ENCODE measurements at regions of chr19 and their contacts with region 1.

Region 1: GRCh38 chr19:43446746-43447489 is 18.5 kb downstream of the LYPD3 start:
- DNase-seq: peak; percentile 74 to 81 (median 79)
- H3K4me3 ChIP-seq: no peak overlapping the region
- H3K4me3 Mint-ChIP-seq: peak overlapping the region in 2 of 8 donors; percentile 3 to 52
- H3K27ac ChIP-seq: no peak overlapping the region
- H3K27ac Mint-ChIP-seq: peak overlapping the region; percentile 54 to 93 (median 75)
- H3K4me1 ChIP-seq: peaks cover 16% of the 10 kb centered on the region
- H3K4me1 Mint-ChIP-seq: peaks cover 13 to 29% (median 20%) of the 10 kb centered on the region in 4 donors
- H3K27me3 ChIP-seq: no peaks in the 10 kb centered on the region
- H3K27me3 Mint-ChIP-seq: no peaks in the 10 kb centered on the region

Region 2: DNA sequence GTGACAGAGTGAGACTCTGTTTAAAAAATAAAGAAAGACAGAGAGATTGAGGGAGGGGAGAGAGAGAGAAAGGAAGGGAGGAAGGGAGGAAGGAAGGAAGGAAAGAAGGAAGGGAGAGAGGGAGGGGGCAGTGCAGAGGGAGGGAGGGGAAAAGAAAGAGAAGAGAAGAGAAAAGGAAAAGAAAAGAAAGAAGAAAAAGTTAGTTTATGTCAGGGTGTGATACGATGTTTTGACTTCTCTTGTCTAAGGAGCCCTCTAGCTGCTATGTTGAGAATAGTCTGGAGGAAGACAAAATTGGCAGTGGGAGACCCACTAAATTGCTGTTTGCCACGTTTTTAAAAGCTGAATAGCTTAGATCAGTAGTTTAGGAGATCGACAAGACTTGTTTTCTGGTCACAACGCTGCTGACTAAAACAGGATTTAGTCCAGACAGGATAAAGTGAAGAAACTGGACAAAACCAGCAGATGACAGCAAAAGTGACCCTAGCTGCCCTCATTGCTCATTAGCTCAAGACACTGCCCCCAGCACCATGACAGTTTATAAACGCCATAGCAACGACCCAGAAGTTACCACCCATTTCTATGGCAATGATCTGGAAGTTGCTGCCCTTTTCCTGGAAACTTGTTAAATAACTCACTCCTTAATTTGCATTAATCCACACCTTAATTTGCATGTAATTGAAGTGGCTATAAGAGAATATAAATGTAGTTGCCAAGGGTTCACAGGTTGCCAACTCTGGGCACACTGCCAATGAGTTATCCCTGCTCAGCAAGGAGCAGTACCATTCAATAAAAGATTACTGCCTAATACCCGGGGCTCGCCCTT is 21.1 kb before region 1 on chr19:
- CTCF ChIA-PET with region 1: interaction called, 413 read pairs
- POLR2A ChIA-PET with region 1: interaction called, 4 read pairs
- intact Hi-C with region 1: no loop called
- DNase-seq: peak in 1 of 5 donors; percentile 13
- H3K4me3 ChIP-seq: no peak overlapping the region
- H3K4me3 Mint-ChIP-seq: no peak overlapping the region
- H3K27ac ChIP-seq: no peak overlapping the region
- H3K27ac Mint-ChIP-seq: peak overlapping the region in 3 of 7 donors; percentile 17 to 85 (median 52)
- H3K4me1 ChIP-seq: peaks cover 18% of the 10 kb centered on the region
- H3K4me1 Mint-ChIP-seq: peaks cover 5 to 21% (median 10%) of the 10 kb centered on the region in 4 donors
- H3K27me3 ChIP-seq: no peaks in the 10 kb centered on the region
- H3K27me3 Mint-ChIP-seq: peaks cover 0 to 2% of the 10 kb centered on the region in 2 donors

Region 3: DNA sequence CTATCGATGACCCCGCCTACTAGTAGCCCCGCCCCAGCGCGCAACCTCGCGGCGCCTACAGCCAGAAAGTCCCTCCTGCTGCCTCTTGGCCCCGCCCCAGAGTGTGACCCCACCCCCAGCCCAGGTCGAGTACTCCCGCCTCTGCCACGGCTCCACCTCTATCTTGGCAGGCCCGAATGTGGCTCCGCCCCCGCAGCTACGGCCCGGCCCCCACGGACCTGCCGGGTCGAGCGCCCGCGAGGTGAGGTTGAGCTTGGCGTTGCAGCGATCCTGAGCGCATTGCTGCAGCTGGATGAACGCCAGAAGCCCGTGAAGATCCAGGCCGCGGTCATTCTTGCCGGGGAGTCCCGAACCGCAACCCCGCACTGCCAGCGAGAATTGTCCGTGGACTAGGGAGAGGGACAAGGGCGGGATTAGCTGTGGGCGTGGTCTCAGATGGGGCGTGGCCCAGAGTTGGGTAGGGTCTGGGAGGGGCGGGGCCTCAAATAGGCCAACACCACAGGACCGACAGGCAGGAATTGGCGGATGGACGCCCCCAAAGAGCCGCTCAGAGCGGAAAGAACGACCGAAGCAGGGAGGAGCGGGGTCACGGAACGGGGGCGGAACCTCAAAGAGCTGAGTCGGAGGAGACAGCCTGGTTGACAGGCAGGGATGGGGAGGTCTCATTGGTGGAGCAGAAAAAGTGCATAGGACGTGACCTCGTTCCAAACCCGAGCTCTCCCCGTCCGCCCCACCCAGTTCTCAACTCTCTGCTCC is 16.6 kb after region 1 on chr19:
- CTCF ChIA-PET with region 1: interaction called, 34 read pairs
- POLR2A ChIA-PET with region 1: interaction called, 29 read pairs
- intact Hi-C with region 1: loop called (anchors 2 kb)
- DNase-seq: peak; percentile 98 to 100 (median 98)
- H3K4me3 ChIP-seq: peak overlapping the region; percentile 79 to 98
- H3K4me3 Mint-ChIP-seq: peak overlapping the region; percentile 90 to 98 (median 94)
- H3K27ac ChIP-seq: peak overlapping the region; percentile 80
- H3K27ac Mint-ChIP-seq: peak overlapping the region; percentile 95 to 100 (median 99)
- H3K4me1 ChIP-seq: peaks cover 34% of the 10 kb centered on the region
- H3K4me1 Mint-ChIP-seq: peaks cover 25 to 64% (median 43%) of the 10 kb centered on the region in 4 donors
- H3K27me3 ChIP-seq: no peaks in the 10 kb centered on the region
- H3K27me3 Mint-ChIP-seq: no peaks in the 10 kb centered on the region

Region 4: GRCh38 chr19:43503501-43504425 is 56.8 kb after region 1 on chr19:
- CTCF ChIA-PET with region 1: interaction called, 34 read pairs
- POLR2A ChIA-PET with region 1: interaction called, 21 read pairs
- intact Hi-C with region 1: loop called (anchors 1 kb)
- DNase-seq: peak; percentile 96 to 99 (median 97)
- H3K4me3 ChIP-seq: peak overlapping the region; percentile 73 to 74
- H3K4me3 Mint-ChIP-seq: peak overlapping the region; percentile 91 to 98 (median 94)
- H3K27ac ChIP-seq: peak overlapping the region; percentile 89
- H3K27ac Mint-ChIP-seq: peak overlapping the region; percentile 95 to 100 (median 98)
- H3K4me1 ChIP-seq: peaks cover 22% of the 10 kb centered on the region
- H3K4me1 Mint-ChIP-seq: peaks cover 16 to 51% (median 34%) of the 10 kb centered on the region in 4 donors
- H3K27me3 ChIP-seq: no peaks in the 10 kb centered on the region
- H3K27me3 Mint-ChIP-seq: no peaks in the 10 kb centered on the region

Region 5: DNA sequence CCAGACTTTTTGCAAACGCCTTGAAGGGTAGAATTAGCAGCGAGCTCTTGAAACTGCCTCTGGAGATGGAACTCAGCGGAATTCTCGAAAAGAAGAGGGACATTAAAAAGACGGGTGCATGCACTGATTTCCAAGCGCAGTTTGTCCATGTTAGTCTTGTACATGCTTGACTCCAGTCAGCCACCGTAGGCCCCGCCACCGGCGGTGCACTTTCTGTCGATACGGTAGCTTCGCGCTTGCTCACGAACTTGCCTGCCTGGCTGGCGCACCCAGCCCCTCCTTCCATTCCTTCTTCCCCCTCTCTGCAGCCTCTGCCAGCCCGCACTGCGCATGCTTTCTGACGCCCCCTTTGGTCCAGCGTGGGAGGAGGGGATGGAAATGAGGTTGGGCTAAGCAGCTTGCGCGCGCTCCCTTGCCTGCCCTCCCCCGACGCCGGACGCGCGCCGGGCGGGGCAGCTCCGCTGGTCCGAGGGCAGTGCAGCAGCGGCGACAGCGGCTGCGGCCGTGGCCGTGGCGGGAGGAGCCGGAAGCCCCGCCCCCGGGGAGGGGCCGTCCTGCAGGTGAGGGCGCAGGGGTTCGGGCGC is 86.1 kb after region 1 on chr19 and contains the start of gene ZNF575:
- CTCF ChIA-PET with region 1: interaction called, 835 read pairs
- POLR2A ChIA-PET with region 1: interaction called, 3 read pairs
- intact Hi-C with region 1: no loop called
- DNase-seq: peak; percentile 82 to 88 (median 84)
- H3K4me3 ChIP-seq: peak within 1 kb of the TSS; percentile 69 to 88
- H3K4me3 Mint-ChIP-seq: peak within 1 kb of the TSS; percentile 91 to 99 (median 98)
- H3K27ac ChIP-seq: peak within 1 kb of the TSS; percentile 53
- H3K27ac Mint-ChIP-seq: peak within 1 kb of the TSS; percentile 95 to 99 (median 98)
- H3K4me1 ChIP-seq: peaks cover 17% of the 10 kb centered on the region
- H3K4me1 Mint-ChIP-seq: peaks cover 10 to 22% (median 15%) of the 10 kb centered on the region in 4 donors
- H3K27me3 ChIP-seq: no peaks in the 10 kb centered on the region
- H3K27me3 Mint-ChIP-seq: no peaks in the 10 kb centered on the region
- total RNA-seq, gene ZNF575: 11.0 to 11.8 TPM

Region 6: DNA sequence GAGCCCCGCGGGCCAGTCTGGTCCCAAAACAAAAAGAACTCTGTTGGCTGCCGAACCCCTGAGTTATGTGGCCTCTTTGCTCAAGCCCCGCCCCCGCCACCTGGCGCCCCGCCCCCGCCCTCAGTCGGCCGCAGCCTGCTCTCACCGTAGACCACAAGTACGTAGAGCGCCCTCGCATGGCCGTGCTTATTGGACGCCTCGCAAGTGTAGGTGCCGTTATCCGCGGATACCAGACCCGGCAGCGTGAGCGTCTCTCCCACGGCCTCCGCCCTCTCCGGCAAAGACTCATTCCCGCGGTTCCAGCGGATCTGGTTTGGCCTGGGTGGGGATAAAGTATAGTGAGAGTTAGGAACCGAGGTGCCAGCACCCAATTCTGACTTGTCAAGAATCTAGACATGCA is 178.0 kb after region 1 on chr19:
- CTCF ChIA-PET with region 1: interaction called, 10 read pairs
- POLR2A ChIA-PET with region 1: no interaction called
- intact Hi-C with region 1: no loop called
- DNase-seq: peak; percentile 78 to 89 (median 83)
- H3K4me3 ChIP-seq: no peak overlapping the region
- H3K4me3 Mint-ChIP-seq: peak overlapping the region in 3 of 8 donors; percentile 4 to 49 (median 11)
- H3K27ac ChIP-seq: no peak overlapping the region
- H3K27ac Mint-ChIP-seq: peak overlapping the region in 6 of 7 donors; percentile 18 to 88 (median 34)
- H3K4me1 ChIP-seq: peaks cover 19% of the 10 kb centered on the region
- H3K4me1 Mint-ChIP-seq: peaks cover 11 to 35% (median 20%) of the 10 kb centered on the region in 4 donors
- H3K27me3 ChIP-seq: no peaks in the 10 kb centered on the region
- H3K27me3 Mint-ChIP-seq: peaks cover 2 to 9% of the 10 kb centered on the region in 2 donors

Region 7: GRCh38 chr19:43765109-43765876 is 318.4 kb after region 1 on chr19:
- CTCF ChIA-PET with region 1: no interaction called
- POLR2A ChIA-PET with region 1: no interaction called
- intact Hi-C with region 1: no loop called
- DNase-seq: peak; percentile 59 to 91 (median 63)
- H3K4me3 ChIP-seq: peak overlapping the region in 1 of 2 donors; percentile 25
- H3K4me3 Mint-ChIP-seq: peak overlapping the region; percentile 34 to 75 (median 66)
- H3K27ac ChIP-seq: peak overlapping the region; percentile 50
- H3K27ac Mint-ChIP-seq: peak overlapping the region; percentile 83 to 94 (median 90)
- H3K4me1 ChIP-seq: peaks cover 40% of the 10 kb centered on the region
- H3K4me1 Mint-ChIP-seq: peaks cover 26 to 49% (median 39%) of the 10 kb centered on the region in 4 donors
- H3K27me3 ChIP-seq: no peaks in the 10 kb centered on the region
- H3K27me3 Mint-ChIP-seq: no peaks in the 10 kb centered on the region